ENCODE measurements at regions of chr20 and their contacts with region 1.

Region 1: GRCh38 chr20:58243653-58244410 is 15.4 kb upstream of the ANKRD60 start:
- DNase-seq: no peak
- H3K4me3 ChIP-seq: no peak overlapping the region
- H3K4me3 Mint-ChIP-seq: no peak overlapping the region
- H3K27ac ChIP-seq: no peak overlapping the region
- H3K27ac Mint-ChIP-seq: no peak overlapping the region
- H3K4me1 ChIP-seq: no peaks in the 10 kb centered on the region
- H3K4me1 Mint-ChIP-seq: no peaks in the 10 kb centered on the region
- H3K27me3 ChIP-seq: no peaks in the 10 kb centered on the region
- H3K27me3 Mint-ChIP-seq: no peaks in the 10 kb centered on the region
- CTCF ChIP-seq: no peak

Region 2: DNA sequence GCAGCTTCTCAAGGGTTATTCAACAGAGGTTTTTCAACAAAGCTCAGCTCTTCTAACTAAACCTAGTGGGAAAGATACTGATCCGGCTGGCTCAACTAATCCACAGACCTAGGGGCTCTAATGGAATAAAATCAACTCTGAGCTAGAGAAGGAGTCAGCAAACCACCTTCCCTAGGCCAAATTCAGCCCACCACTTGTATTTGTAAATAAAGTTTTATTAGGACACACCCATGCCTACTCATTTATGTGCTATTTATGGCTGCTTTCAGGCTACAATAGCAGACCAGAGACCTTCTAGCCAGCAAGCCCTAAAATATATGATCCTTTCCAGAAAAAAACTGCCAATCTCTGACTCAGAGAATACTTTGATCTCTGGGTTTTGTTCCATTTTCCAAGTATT is 59.7 kb after region 1 on chr20:
- intact Hi-C with region 1: loop called in 1 of 2 experiments (anchors 5 kb)
- DNase-seq: no peak
- H3K4me3 ChIP-seq: no peak overlapping the region
- H3K4me3 Mint-ChIP-seq: no peak overlapping the region
- H3K27ac ChIP-seq: no peak overlapping the region
- H3K27ac Mint-ChIP-seq: no peak overlapping the region
- H3K4me1 ChIP-seq: peaks cover 25 to 27% of the 10 kb centered on the region in 2 donors
- H3K4me1 Mint-ChIP-seq: peaks cover 28% of the 10 kb centered on the region
- H3K27me3 ChIP-seq: no peaks in the 10 kb centered on the region
- H3K27me3 Mint-ChIP-seq: peaks cover 0 to 9% (median 2%) of the 10 kb centered on the region in 3 donors
- CTCF ChIP-seq: no peak